Activated naive CD4-positive, alpha-beta T cell treated with anti-CD3 and anti-CD28 coated beads, Interleukin-2, amount 10 ng/mL, durations not matched to agents 7 days and 5 days (primary cell): ENCODE measurements at regions of chr3 and their contacts with region 1.

Region 1: GRCh38 chr3:5197470-5198312 is 10.2 kb downstream of the EDEM1 start:
- DNase-seq: peak; percentile 63
- H3K4me3 Mint-ChIP-seq: peak overlapping the region; percentile 58
- H3K27ac Mint-ChIP-seq: peak overlapping the region; percentile 93
- H3K4me1 Mint-ChIP-seq: peaks cover 78% of the 10 kb centered on the region
- H3K27me3 Mint-ChIP-seq: no peaks in the 10 kb centered on the region

Region 2: DNA sequence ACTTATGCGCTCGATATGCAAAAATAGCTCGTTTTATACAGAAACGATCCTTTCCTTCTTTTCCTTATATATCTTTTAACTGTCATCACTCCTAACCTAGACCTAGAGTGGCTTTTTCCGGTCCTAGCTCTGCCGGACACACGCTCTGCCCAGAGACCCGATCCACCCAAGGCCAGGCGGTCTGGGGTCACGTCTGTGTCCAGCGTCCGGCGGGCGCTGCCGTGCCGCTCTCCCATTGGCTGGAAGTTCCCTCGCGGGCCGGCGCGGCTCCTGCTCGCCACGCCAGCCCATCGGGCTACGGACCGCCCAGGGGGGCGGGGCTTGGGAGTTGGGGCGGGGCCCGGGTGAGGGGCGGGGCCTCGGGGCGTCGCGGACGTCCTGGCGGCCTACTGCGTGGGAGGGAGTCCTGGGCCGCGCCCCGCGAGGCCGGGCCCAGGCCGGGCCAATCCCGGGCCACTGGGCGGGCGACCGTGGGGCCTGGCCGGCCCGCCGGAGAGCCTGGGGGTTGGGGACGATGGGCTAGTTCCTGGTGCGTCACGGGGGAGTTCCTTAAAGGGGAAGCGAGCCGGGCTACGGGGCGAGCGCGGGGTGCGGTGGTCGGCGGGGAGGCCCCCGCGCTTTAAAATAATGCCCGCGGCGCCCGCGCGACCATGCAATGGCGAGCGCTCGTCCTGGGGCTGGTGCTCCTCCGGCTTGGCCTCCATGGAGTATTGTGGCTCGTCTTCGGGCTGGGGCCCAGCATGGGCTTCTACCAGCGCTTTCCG is 10.4 kb before region 1 on chr3 and contains the start of gene EDEM1:
- CTCF ChIA-PET with region 1: interaction called, 17 read pairs
- DNase-seq: peak; percentile 95
- H3K4me3 Mint-ChIP-seq: peak within 1 kb of the TSS; percentile 93
- H3K27ac Mint-ChIP-seq: peak within 1 kb of the TSS; percentile 95
- H3K4me1 Mint-ChIP-seq: peaks cover 37% of the 10 kb centered on the region
- H3K27me3 Mint-ChIP-seq: no peaks in the 10 kb centered on the region